Ascending aorta (tissue), 2 donors: ENCODE measurements at regions of chr12 and their contacts with region 1.

Region 1: GRCh38 chr12:127588249-127588648 is 678.7 kb upstream of the TMEM132C start:
- DNase-seq: peak; percentile 25 to 88
- H3K4me3 ChIP-seq: no peak overlapping the region
- H3K27ac ChIP-seq: peak overlapping the region; percentile 78 to 87
- H3K4me1 ChIP-seq: peaks cover 0 to 10% of the 10 kb centered on the region in 2 donors
- H3K27me3 ChIP-seq: no peaks in the 10 kb centered on the region
- CTCF ChIP-seq: no peak

Region 2: GRCh38 chr12:127619869-127620734 is 31.9 kb after region 1 on chr12:
- intact Hi-C with region 1: loop called (anchors 1 kb)
- DNase-seq: peak in 1 of 2 donors; percentile 74
- H3K4me3 ChIP-seq: peak overlapping the region in 1 of 2 donors; percentile 30
- H3K27ac ChIP-seq: peak overlapping the region; percentile 70 to 80
- H3K4me1 ChIP-seq: peaks cover 0 to 23% of the 10 kb centered on the region in 2 donors
- H3K27me3 ChIP-seq: no peaks in the 10 kb centered on the region
- CTCF ChIP-seq: no peak

Region 3: DNA sequence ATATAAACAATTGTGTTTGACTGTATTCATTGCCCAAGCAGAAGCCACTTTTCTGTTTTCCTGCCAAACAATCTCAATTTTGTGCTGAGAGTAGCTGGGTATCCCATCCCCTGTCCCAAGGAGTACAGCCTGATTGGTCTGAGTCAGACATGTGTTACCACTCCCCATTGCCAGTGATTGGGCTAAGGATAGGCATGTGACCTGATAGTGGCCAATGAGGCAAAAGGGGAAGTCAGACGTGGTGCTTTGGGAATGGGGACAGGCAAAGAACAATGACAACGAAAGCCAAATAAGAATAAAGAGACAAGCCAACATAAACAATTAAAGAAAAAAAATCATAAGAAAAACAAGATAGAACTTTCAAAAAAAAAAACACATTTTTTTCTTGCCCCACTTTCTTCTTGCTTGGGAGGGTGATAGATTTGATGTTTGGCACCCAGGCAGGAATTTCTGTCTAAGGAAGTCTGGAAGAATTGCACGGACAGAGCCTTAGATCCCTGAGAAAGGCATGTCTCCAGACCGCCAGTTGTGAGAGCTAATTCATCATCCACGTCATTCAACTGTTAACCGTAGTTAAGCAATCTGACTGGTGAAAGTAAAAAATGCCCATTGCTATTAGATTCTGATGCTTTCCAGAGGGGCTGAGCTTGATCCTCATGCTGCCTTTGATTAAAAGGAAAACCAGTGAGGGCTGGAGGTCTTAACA is 52.1 kb after region 1 on chr12:
- intact Hi-C with region 1: loop called (anchors 1 kb)
- DNase-seq: peak; percentile 14 to 86
- H3K4me3 ChIP-seq: peak overlapping the region in 1 of 2 donors; percentile 6
- H3K27ac ChIP-seq: peak overlapping the region; percentile 72 to 81
- H3K4me1 ChIP-seq: peaks cover 0 to 16% of the 10 kb centered on the region in 2 donors
- H3K27me3 ChIP-seq: no peaks in the 10 kb centered on the region
- CTCF ChIP-seq: no peak

Region 4: GRCh38 chr12:128920468-128920867 is 1332.2 kb after region 1 on chr12:
- intact Hi-C with region 1: loop called (anchors 5 kb)
- DNase-seq: peak in 1 of 2 donors; percentile 88
- H3K4me3 ChIP-seq: peak overlapping the region in 1 of 2 donors; percentile 21
- H3K27ac ChIP-seq: peak overlapping the region; percentile 62 to 66
- H3K4me1 ChIP-seq: peaks cover 5 to 7% of the 10 kb centered on the region in 2 donors
- H3K27me3 ChIP-seq: no peaks in the 10 kb centered on the region
- CTCF ChIP-seq: no peak